HEK293T (cell line): ENCODE measurements at regions of chr17 and their contacts with region 1.

Region 1: DNA sequence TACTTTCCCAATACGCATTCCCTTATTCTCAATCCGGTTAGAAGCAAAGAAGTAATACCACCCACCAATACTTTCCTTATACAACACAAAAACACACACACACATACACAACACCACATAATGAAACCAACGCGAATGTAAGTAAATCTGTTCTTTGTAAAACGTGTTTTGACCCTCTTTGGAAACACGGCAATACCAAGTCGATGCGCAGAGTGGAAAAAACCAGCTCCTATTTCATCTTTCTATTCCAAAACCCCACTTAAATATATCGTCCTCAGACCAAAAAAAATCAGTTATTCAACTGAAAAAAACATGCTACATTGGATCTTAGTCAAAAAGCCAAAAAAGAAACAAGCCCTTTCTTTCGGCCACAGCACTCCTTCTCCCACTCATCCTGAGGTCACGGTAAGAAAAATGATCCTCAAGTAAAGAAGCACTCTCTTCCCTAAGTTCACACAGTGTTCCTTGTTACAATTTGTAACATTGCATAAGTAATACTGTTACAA is 31.0 kb upstream of the ARL4D start:
- DNase-seq: peak; percentile 60

Region 2: GRCh38 chr17:43024407-43025289 is 343.1 kb before region 1 on chr17 and contains the start of gene RND2:
- CTCF ChIA-PET with region 1: no interaction called
- POLR2A ChIA-PET with region 1: interaction called, 33 read pairs
- DNase-seq: peak; percentile 81

Region 3: DNA sequence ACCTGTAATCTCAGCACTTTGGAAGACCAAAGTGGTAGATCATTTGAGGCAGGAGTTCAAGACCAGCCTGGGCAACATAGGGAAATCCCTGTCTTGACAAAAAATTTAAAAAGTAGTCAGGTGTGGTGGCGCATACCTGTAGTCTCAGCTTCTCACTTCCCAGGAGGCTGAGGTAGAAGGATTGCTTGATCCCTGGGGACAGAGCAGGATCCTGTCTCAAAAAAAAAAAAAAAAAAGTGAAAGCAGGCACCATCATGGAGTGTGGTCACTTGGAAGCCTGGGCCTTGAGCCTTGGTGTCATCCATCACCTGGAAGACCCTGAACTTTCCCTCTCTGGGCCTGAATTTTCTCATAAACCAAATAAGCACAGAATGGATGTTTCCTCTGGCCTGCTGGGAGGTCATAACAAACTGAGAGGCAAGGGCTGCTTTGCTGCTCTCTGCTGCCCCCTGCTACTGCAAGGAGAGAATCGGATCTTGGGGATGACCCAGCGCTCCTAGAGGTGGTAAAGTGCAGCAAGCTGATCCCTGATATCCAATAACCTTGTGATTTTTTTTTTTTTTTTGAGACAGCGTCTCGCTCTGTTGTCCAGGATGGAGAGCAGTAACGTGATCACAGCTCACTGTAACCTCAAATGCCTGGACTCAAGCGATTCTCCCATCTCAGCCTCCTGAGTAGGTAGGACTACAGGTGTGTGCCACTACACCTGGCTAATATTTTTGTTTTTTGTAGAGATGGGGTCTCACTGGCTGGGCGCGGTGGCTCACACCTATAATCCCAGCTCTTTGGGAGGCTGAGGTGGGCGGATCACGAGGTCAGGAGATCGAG is 58.1 kb before region 1 on chr17:
- CTCF ChIA-PET with region 1: no interaction called
- POLR2A ChIA-PET with region 1: interaction called, 98 read pairs
- DNase-seq: no peak

Region 4: GRCh38 chr17:43349142-43349541 is 18.6 kb before region 1 on chr17:
- CTCF ChIA-PET with region 1: no interaction called
- POLR2A ChIA-PET with region 1: interaction called, 87 read pairs
- DNase-seq: no peak

Region 5: DNA sequence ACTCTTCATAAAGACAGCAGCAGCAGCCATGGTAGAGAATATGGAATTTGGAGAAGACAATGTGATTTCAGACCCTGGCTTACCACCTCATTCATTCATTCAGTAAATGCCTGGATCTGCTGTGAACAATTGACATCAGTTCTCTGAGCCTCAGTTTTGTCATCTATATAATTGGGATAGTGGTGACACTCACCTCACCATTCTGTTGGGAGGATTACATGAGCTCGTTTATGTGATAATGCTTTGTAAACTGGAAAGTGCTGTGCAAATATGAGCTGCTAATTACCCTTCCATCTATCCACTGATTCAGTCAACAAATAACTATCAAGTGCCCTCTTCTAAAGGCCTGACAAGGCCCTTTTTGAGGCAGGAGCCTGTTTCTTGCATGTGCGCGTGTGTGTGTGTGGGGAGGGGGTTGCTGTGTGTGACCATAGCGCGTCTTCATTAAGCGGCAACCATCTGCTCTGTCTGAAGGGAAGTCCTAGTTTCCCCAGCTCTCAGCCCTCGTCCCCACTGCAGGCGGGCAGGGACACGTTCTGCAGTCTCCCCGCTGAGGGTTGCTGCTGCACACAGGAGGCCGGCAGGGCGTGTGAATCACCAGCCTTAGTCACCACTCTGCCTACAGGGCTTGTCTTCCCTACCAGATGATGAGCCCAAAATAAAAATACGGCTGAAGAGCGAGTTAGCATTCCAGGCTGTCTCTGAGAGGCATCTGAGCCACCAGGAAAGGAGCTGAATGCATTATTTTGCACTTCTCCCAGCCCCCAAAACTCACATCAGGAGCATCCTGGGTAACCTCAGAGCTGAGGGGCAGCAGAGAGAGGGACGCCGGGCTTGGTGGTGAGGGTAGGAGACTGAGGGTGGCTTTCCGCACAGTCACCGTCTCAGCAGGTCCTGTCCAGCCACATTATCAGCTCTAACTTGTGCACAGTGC is 50.9 kb after region 1 on chr17:
- CTCF ChIA-PET with region 1: no interaction called
- POLR2A ChIA-PET with region 1: interaction called, 31 read pairs
- DNase-seq: peak; percentile 39

Region 6: GRCh38 chr17:43467981-43468581 is 100.3 kb after region 1 on chr17:
- CTCF ChIA-PET with region 1: no interaction called
- POLR2A ChIA-PET with region 1: interaction called, 10 read pairs
- DNase-seq: no peak